Panc1 (cell line): ENCODE measurements at regions of chr11 and their contacts with region 1.

Region 1: GRCh38 chr11:30196400-30197206 is 34.2 kb upstream of the FSHB start:
- DNase-seq: peak; percentile 24
- ATAC-seq: peak; percentile 84
- H3K4me3 ChIP-seq: no peak overlapping the region
- H3K27ac ChIP-seq: no peak overlapping the region
- H3K4me1 ChIP-seq: no peaks in the 10 kb centered on the region
- H3K27me3 ChIP-seq: no peaks in the 10 kb centered on the region
- CTCF ChIP-seq: peak; percentile 84

Region 2: DNA sequence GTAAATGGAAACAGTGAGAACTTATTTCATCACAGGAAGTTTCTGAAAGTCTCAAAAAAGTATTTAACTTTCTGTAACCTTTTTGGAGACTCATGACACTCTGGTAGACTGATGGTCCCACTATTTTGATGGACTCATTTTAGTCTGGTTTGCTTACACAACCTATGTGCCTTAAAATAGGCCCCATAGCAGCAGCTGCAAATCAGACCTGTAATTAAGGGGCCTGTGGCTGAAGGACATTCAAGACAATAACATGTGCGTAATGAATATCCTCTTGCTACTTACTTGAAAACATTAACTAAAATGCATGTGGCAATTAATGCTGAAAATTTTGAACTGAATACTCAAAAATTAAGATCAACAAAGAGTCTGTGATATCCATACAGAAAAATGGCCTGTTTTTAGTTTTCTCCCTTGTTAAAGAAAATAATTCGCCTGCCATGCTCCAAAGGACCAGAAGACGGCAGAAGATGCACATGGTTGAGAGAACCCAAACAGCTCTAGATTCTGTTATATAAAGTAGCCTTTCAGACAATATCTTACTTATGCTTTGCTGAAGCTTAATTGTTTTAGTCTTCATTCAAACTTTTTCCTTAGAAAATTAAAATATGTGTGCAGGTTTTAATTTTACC is 748.2 kb before region 1 on chr11:
- CTCF ChIA-PET with region 1: no interaction called
- POLR2A ChIA-PET with region 1: no interaction called
- in situ Hi-C with region 1: no loop called
- intact Hi-C with region 1: loop called (anchors 2 kb)
- DNase-seq: no peak
- ATAC-seq: no peak
- H3K4me3 ChIP-seq: no peak overlapping the region
- H3K27ac ChIP-seq: no peak overlapping the region
- H3K4me1 ChIP-seq: no peaks in the 10 kb centered on the region
- H3K27me3 ChIP-seq: no peaks in the 10 kb centered on the region
- CTCF ChIP-seq: peak; percentile 70; the same call in 1 of the 2 replicates

Region 3: GRCh38 chr11:30046582-30046952 is 150.0 kb before region 1 on chr11:
- CTCF ChIA-PET with region 1: no interaction called
- POLR2A ChIA-PET with region 1: no interaction called
- in situ Hi-C with region 1: no loop called
- intact Hi-C with region 1: no loop called
- DNase-seq: no peak
- ATAC-seq: no peak
- H3K4me3 ChIP-seq: no peak overlapping the region
- H3K27ac ChIP-seq: no peak overlapping the region
- H3K4me1 ChIP-seq: no peaks in the 10 kb centered on the region
- H3K27me3 ChIP-seq: no peaks in the 10 kb centered on the region
- CTCF ChIP-seq: no peak

Region 4: DNA sequence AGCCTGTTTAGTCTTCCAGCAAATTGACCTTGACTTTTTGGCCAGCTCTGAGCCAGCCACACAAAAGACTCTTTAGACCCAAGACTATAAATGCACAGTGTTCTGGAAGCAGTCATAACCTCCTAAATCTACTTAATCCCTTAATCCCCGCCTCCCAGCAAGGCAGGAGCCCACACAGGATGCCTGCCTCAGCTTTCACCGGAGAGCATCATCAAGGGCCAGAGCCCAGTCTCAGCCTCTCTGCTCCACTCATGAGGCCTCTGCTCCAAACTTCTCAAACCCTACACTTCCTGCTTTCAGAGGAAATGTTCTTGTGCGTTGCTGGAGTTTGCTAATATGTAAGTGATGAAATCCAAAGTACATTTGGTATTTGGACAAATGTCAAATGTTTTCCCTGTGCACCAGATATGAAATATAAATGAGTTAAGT is 23.7 kb before region 1 on chr11:
- CTCF ChIA-PET with region 1: no interaction called
- POLR2A ChIA-PET with region 1: no interaction called
- in situ Hi-C with region 1: no loop called
- intact Hi-C with region 1: no loop called
- DNase-seq: no peak
- ATAC-seq: no peak
- H3K4me3 ChIP-seq: no peak overlapping the region
- H3K27ac ChIP-seq: no peak overlapping the region
- H3K4me1 ChIP-seq: no peaks in the 10 kb centered on the region
- H3K27me3 ChIP-seq: no peaks in the 10 kb centered on the region
- CTCF ChIP-seq: no peak

Region 5: DNA sequence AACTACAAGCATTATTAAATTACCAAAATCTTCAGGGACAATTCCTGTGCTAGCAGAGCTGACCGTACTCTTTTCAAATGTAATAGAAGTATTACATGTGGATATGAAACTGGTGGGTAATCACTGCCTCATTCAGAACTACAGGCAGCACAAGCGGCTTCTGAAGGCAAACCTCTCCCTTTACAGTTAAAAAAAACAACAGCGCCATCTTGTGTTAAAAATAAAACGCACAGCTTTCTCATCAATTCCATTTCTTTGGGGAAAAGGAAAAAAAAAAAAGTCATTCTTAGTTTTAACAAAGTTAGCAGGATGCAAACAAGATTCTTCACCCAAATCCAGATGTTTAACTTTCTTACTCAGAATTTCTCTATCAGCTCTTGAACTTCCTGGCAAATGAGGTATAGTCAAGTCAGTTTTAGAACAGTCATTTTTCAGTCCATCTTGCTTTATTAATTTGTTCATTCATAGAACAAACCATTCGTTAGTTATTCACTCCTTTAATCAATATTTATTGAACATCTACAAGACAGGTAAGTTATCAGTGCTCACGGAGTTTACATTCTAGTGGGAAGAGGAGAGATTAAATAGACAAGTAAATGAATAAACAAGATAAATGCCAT is 721.4 kb after region 1 on chr11:
- CTCF ChIA-PET with region 1: interaction called, 11 read pairs
- POLR2A ChIA-PET with region 1: no interaction called
- in situ Hi-C with region 1: no loop called
- intact Hi-C with region 1: no loop called
- DNase-seq: peak; percentile 17
- ATAC-seq: peak; percentile 73; the same call in 1 of the 2 replicates
- H3K4me3 ChIP-seq: no peak overlapping the region
- H3K27ac ChIP-seq: no peak overlapping the region
- H3K4me1 ChIP-seq: no peaks in the 10 kb centered on the region
- H3K27me3 ChIP-seq: no peaks in the 10 kb centered on the region; the same call in 1 of the 2 replicates
- CTCF ChIP-seq: peak; percentile 69; the same call in 1 of the 2 replicates